B cell (primary cell): ENCODE measurements at regions of chr12 and their contacts with region 1.

Region 1: DNA sequence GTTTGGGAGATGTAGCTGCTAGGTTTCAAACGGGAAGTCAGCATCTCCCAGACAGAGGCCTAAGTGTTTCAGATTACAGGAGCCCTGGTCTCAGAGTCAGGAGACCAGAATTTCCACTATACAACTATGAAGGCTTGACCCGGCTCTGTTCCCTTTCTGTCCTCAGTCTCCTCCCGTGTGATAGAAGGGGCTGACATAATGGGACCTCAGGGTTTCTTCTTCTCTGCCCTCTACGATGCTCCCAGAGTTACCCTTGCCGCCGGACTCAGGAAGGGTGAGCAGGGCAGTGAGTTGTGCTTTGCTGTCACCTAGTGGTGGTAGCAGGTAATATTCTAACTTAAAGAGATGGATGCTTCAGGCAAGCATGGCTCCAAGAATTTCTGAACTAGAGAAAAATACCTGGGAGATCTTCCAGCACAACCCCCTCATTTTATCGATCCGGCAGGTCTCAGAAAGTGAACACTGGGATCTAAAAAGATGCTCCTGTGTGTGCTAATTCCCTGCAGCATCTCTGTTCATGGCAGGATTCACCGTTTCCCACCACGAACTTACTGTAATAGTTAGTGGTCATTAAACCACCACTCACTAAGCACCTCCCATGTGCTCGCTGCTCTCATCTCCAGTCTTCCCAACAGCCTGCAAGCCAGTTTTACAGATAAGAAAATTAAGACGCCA is 84.4 kb downstream of the VWF start:
- DNase-seq: peak; percentile 70
- ATAC-seq: peak; percentile 83
- H3K4me3 ChIP-seq: peak overlapping the region in 1 of 5 experiments; percentile 21
- H3K4me3 Mint-ChIP-seq: peak overlapping the region; percentile 4
- H3K27ac ChIP-seq: no peak overlapping the region
- H3K27ac Mint-ChIP-seq: no peak overlapping the region
- H3K4me1 ChIP-seq: peaks cover 0 to 3% of the 10 kb centered on the region in 2 donors
- H3K4me1 Mint-ChIP-seq: peaks cover 2% of the 10 kb centered on the region
- H3K27me3 ChIP-seq: peaks cover 0 to 5% (median 0%) of the 10 kb centered on the region in 4 experiments
- H3K27me3 Mint-ChIP-seq: peaks cover 18% of the 10 kb centered on the region
- CTCF ChIP-seq: peak; percentile 93

Region 2: DNA sequence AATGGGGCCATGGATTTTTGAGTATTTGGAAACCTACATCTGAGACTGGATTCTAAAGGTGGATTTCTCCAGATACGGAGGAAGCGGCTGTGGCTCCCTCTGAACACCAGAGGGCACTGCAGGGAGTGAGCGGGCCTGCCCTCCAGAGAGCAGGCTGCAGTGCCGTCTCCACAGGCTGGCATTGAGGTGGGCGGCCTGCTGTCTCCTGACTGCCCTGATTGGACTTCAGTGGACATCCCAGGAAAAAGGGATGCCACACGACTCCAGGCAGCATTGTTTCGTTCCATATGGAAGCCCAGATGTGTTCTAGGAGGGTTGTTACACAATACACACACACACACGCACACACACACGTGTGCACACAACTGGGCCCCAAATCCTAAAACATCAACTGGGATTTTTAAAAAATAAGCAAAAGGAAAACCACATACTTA is 74.1 kb before region 1 on chr12:
- CTCF ChIA-PET with region 1: interaction called, 7 read pairs
- POLR2A ChIA-PET with region 1: no interaction called
- intact Hi-C with region 1: loop called (anchors 1 kb)
- DNase-seq: peak; percentile 45
- ATAC-seq: peak; percentile 49
- H3K4me3 ChIP-seq: no peak overlapping the region
- H3K4me3 Mint-ChIP-seq: no peak overlapping the region
- H3K27ac ChIP-seq: no peak overlapping the region
- H3K27ac Mint-ChIP-seq: no peak overlapping the region
- H3K4me1 ChIP-seq: no peaks in the 10 kb centered on the region
- H3K4me1 Mint-ChIP-seq: peaks cover 2% of the 10 kb centered on the region
- H3K27me3 ChIP-seq: peaks cover 0 to 9% (median 2%) of the 10 kb centered on the region in 4 experiments
- H3K27me3 Mint-ChIP-seq: peaks cover 19% of the 10 kb centered on the region
- CTCF ChIP-seq: peak; percentile 74